Astrocyte of the cerebellum (primary cell): ENCODE measurements at regions of chr22 and their contacts with region 1.

Region 1: GRCh38 chr22:30282616-30283081 is 6.7 kb downstream of the CASTOR1 start:
- DNase-seq: no peak
- H3K4me3 ChIP-seq: no peak overlapping the region
- CTCF ChIP-seq: no peak

Region 2: GRCh38 chr22:30326706-30327362 is 44.2 kb after region 1 on chr22 and contains the start of gene TBC1D10A:
- in situ Hi-C with region 1: loop called (anchors 5 kb)
- DNase-seq: peak; percentile 57
- H3K4me3 ChIP-seq: peak within 1 kb of the TSS; percentile 77
- CTCF ChIP-seq: no peak